ENCODE measurements at regions of chr11 and their contacts with region 1.

Region 1: DNA sequence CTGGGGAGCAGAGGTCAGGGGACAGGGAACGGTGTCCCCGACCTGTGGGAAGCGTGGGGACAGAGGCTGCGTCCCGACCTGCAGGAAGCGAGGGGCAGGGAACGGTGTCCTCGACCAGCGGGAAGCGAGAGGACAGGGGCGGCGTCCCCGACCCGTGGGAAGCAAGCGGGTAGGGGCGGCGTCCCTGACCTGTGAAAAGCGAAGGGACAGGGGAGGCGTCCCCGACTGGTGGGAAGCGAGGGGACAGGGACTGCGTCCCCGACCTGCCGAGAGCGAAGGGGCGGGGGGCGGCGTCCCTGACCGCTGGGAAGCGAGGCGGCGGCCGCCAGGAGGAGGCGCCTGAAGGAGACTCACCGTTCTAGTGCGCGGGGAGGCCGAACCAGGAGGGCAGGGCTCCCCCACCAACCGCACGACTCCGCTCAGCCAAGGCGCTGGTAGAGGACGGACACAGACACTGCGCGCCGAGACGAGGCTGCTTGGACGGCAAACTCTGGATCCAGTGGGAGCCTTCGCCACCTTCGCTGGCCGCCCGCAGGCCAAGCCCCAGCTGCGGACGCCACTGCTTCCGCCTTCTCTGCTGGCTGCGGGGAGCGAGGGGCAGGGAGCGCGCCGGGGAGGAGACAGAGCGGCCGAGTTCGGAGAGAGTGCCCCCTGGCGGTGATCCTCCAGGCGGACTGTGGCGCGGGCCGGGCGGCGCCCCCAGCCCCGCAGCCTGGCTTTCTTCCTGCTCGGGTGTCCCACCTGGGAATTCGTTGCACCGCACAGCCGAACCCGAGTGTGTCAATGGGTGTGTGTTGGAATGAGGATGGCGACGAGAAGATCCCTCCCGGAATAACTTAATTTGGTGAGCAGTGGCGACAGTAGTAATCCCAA is at the start of gene TRAF6:
- DNase-seq: peak; percentile 76
- ATAC-seq: peak; percentile 91
- H3K4me3 ChIP-seq: peak within 1 kb of the TSS; percentile 92
- H3K27ac ChIP-seq: peak within 1 kb of the TSS; percentile 38
- H3K4me1 ChIP-seq: peaks cover 11% of the 10 kb centered on the region; the same call in 1 of the 2 replicates
- H3K27me3 ChIP-seq: no peaks in the 10 kb centered on the region
- CTCF ChIP-seq: peak; percentile 83
- total RNA-seq, gene TRAF6: 4.0 and 4.1 TPM in 2 replicates

Region 2: GRCh38 chr11:36485298-36486002 is 24.5 kb before region 1 on chr11:
- CTCF ChIA-PET with region 1: no interaction called
- POLR2A ChIA-PET with region 1: no interaction called
- intact Hi-C with region 1: no loop called
- DNase-seq: no peak
- ATAC-seq: no peak
- H3K4me3 ChIP-seq: no peak overlapping the region
- H3K27ac ChIP-seq: no peak overlapping the region
- H3K4me1 ChIP-seq: no peaks in the 10 kb centered on the region
- H3K27me3 ChIP-seq: no peaks in the 10 kb centered on the region
- CTCF ChIP-seq: no peak

Region 3: GRCh38 chr11:36541001-36541400 is 31.1 kb after region 1 on chr11:
- CTCF ChIA-PET with region 1: interaction called, 10 read pairs
- POLR2A ChIA-PET with region 1: no interaction called
- intact Hi-C with region 1: loop called (anchors 1 kb)
- DNase-seq: peak; percentile 60
- ATAC-seq: peak; percentile 90
- H3K4me3 ChIP-seq: no peak overlapping the region
- H3K27ac ChIP-seq: no peak overlapping the region
- H3K4me1 ChIP-seq: no peaks in the 10 kb centered on the region
- H3K27me3 ChIP-seq: peaks cover 57% of the 10 kb centered on the region
- CTCF ChIP-seq: peak; percentile 65

Region 4: DNA sequence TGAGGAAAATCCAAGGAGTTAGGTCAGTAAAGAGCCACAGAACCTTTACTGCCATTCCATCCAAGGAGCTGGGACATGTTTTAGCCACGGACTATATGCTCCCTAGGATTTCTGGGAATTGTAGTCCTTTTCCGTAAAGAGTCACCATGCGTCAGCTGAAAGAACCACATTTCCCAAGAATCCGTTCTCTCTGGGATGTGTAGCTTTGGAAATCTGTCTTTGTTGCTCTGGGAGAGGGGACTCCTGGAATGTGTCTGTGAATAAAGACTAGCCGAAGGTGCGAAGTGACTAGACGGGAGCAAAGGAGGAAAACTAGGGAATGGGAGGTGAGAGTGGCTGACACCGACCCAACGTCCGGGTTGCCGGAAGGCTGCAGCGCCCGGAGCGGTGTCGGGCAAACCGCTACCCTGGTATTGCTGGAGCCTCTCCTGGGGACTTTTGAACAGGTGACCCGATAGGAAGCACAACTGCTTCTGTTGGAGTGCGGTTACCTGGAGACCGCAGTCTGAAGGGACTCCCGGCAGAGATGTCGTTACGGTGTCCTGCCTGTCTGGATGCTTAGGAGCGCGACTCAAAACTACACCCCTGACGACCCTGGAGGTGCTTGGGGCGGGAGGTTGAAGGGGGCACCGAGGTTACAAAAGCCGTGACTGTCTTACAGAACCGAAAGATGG is 84.5 kb after region 1 on chr11 and contains the start of gene IFTAP:
- CTCF ChIA-PET with region 1: no interaction called
- POLR2A ChIA-PET with region 1: no interaction called
- intact Hi-C with region 1: loop called (anchors 2 kb)
- DNase-seq: peak; percentile 92
- ATAC-seq: peak; percentile 99
- H3K4me3 ChIP-seq: peak within 1 kb of the TSS; percentile 75
- H3K27ac ChIP-seq: no peak within 1 kb of the TSS
- H3K4me1 ChIP-seq: no peaks in the 10 kb centered on the region
- H3K27me3 ChIP-seq: peaks cover 20% of the 10 kb centered on the region
- CTCF ChIP-seq: no peak
- total RNA-seq, gene IFTAP: 12.9 and 17.6 TPM in 2 replicates

Region 5: GRCh38 chr11:36757075-36757474 is 247.1 kb after region 1 on chr11:
- CTCF ChIA-PET with region 1: no interaction called
- POLR2A ChIA-PET with region 1: no interaction called
- intact Hi-C with region 1: no loop called
- DNase-seq: no peak
- ATAC-seq: no peak
- H3K4me3 ChIP-seq: no peak overlapping the region
- H3K27ac ChIP-seq: no peak overlapping the region
- H3K4me1 ChIP-seq: no peaks in the 10 kb centered on the region
- H3K27me3 ChIP-seq: peaks cover 19% of the 10 kb centered on the region
- CTCF ChIP-seq: no peak

Region 6: GRCh38 chr11:36790526-36790925 is 280.6 kb after region 1 on chr11:
- CTCF ChIA-PET with region 1: no interaction called
- POLR2A ChIA-PET with region 1: no interaction called
- intact Hi-C with region 1: no loop called
- DNase-seq: no peak
- ATAC-seq: no peak
- H3K4me3 ChIP-seq: no peak overlapping the region
- H3K27ac ChIP-seq: no peak overlapping the region
- H3K4me1 ChIP-seq: no peaks in the 10 kb centered on the region
- H3K27me3 ChIP-seq: peaks cover 27% of the 10 kb centered on the region; the same call in 1 of the 2 replicates
- CTCF ChIP-seq: no peak

Measured in PC-3 (cell line).